HepG2 (cell line): ENCODE measurements at regions of chr3 and their contacts with region 1.

Region 1: GRCh38 chr3:151146071-151146730 is 56.8 kb downstream of the GPR171 start:
- DNase-seq: peak; percentile 75
- ATAC-seq: peak; percentile 99
- H3K4me3 ChIP-seq: no peak overlapping the region
- H3K27ac ChIP-seq: no peak overlapping the region
- H3K4me1 ChIP-seq: no peaks in the 10 kb centered on the region
- H3K27me3 ChIP-seq: peaks cover 2 to 7% of the 10 kb centered on the region in 2 experiments; a peak in 3 of 5 replicates
- CTCF ChIP-seq: peak; percentile 92
- EP300 ChIP-seq: no peak
- POLR2A ChIP-seq: no peak
- RAD21 ChIP-seq: peak; percentile 85

Region 2: DNA sequence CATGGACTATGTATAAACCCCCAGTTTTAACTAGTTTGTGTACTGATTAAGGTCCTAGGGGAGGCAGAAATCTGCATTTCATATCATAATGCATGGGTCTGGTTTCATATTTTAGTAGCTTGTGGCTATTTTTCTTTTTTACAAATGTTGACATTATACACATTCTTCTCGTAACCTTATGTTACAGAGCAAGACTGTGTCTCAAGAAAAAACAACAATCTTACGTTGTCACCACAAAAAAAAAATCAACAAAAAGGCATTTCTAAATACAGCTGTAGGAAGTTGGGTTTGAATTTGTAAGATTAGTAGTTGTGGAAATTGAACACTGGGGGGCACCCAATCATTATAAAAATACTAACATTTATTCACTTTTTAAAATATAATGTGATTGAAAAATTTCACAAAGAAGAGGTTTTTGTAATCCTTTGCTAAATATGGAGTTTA is 617.8 kb before region 1 on chr3:
- CTCF ChIA-PET with region 1: no interaction called
- POLR2A ChIA-PET with region 1: no interaction called
- in situ Hi-C with region 1: no loop called
- intact Hi-C with region 1: loop called (anchors 10 kb)
- DNase-seq: no peak
- ATAC-seq: no peak
- H3K4me3 ChIP-seq: no peak overlapping the region
- H3K27ac ChIP-seq: no peak overlapping the region
- H3K4me1 ChIP-seq: no peaks in the 10 kb centered on the region; the same call in 1 of the 2 replicates
- H3K27me3 ChIP-seq: no peaks in the 10 kb centered on the region; a peak in 1 of 5 replicates
- CTCF ChIP-seq: peak; percentile 20; the same call in 1 of the 2 replicates
- EP300 ChIP-seq: no peak
- POLR2A ChIP-seq: no peak
- RAD21 ChIP-seq: no peak

Region 3: GRCh38 chr3:150787741-150788370 is 358.3 kb before region 1 on chr3:
- CTCF ChIA-PET with region 1: interaction called, 4 read pairs
- POLR2A ChIA-PET with region 1: no interaction called
- in situ Hi-C with region 1: no loop called
- intact Hi-C with region 1: loop called (anchors 2 kb)
- DNase-seq: peak; percentile 53
- ATAC-seq: peak; percentile 95
- H3K4me3 ChIP-seq: no peak overlapping the region
- H3K27ac ChIP-seq: no peak overlapping the region
- H3K4me1 ChIP-seq: peaks cover 7% of the 10 kb centered on the region; the same call in 1 of the 2 replicates
- H3K27me3 ChIP-seq: peaks cover 2 to 10% of the 10 kb centered on the region in 2 experiments; a peak in 2 of 5 replicates
- CTCF ChIP-seq: peak; percentile 94
- EP300 ChIP-seq: no peak
- POLR2A ChIP-seq: no peak
- RAD21 ChIP-seq: peak; percentile 78

Region 4: DNA sequence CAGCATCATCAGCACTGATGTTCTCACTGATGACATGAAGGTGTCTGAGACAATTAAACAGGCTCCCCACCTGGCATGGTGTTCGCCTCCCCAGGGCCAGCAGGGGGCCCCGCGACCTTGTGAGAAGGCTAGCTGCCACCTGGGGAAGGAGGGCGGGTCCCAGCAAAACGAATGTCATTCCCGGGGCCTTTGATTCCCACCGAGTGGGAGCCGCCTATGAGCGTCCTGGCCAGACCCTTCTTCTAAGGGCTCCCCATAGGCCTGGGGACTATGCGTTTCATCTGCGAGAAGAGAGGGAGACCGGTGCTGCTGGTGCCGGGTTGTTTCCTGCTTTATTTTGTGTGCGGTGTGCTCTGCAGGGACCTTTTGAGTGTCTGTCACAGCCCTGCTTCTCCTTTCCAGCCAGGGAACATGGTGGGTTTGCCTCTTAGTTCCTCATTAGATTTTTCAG is 220.4 kb before region 1 on chr3:
- CTCF ChIA-PET with region 1: interaction called, 22 read pairs
- POLR2A ChIA-PET with region 1: no interaction called
- in situ Hi-C with region 1: loop called (anchors 5 kb)
- intact Hi-C with region 1: loop called (anchors 1 kb)
- DNase-seq: peak; percentile 50
- ATAC-seq: peak; percentile 99
- H3K4me3 ChIP-seq: peak overlapping the region in 1 of 3 experiments; percentile 19; a peak in 1 of 6 replicates
- H3K27ac ChIP-seq: no peak overlapping the region
- H3K4me1 ChIP-seq: no peaks in the 10 kb centered on the region
- H3K27me3 ChIP-seq: peaks cover 0 to 15% of the 10 kb centered on the region in 2 experiments; a peak in 2 of 5 replicates
- CTCF ChIP-seq: peak; percentile 73
- EP300 ChIP-seq: no peak
- POLR2A ChIP-seq: no peak
- RAD21 ChIP-seq: peak; percentile 63

Region 5: DNA sequence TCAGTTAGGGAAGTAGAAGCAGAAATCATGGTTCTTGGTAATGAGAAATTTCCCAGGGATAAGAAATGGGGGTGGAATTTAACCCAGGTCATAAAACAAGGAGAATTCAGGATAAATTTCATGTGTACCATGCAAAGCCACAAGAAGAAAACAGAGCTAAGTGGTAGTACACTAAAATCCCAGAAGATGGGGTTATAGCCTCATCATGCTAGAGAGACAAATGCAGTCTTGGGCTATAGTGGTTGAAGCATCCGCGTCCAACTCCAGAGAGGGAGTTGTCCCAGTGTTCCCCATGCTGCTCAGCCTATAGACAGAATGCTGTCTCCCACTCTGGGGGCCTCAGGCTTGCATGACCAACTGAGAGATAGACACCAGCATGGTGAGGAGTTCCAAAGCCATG is 137.5 kb before region 1 on chr3:
- CTCF ChIA-PET with region 1: interaction called, 5 read pairs
- POLR2A ChIA-PET with region 1: no interaction called
- in situ Hi-C with region 1: no loop called
- intact Hi-C with region 1: loop called (anchors 1 kb)
- DNase-seq: no peak
- ATAC-seq: peak; percentile 58
- H3K4me3 ChIP-seq: no peak overlapping the region
- H3K27ac ChIP-seq: no peak overlapping the region
- H3K4me1 ChIP-seq: 0 out of 2 replicates have a peak, but pooled peaks cover 10% of the 10 kb centered on the region
- H3K27me3 ChIP-seq: no peaks in the 10 kb centered on the region; a peak in 1 of 5 replicates
- CTCF ChIP-seq: peak; percentile 26; the same call in 1 of the 2 replicates
- EP300 ChIP-seq: no peak
- POLR2A ChIP-seq: no peak
- RAD21 ChIP-seq: no peak

Region 6: GRCh38 chr3:151067158-151067557 is 79.0 kb before region 1 on chr3:
- CTCF ChIA-PET with region 1: interaction called, 13 read pairs
- POLR2A ChIA-PET with region 1: no interaction called
- in situ Hi-C with region 1: no loop called
- intact Hi-C with region 1: loop called (anchors 1 kb)
- DNase-seq: peak; percentile 42
- ATAC-seq: peak; percentile 87
- H3K4me3 ChIP-seq: no peak overlapping the region
- H3K27ac ChIP-seq: no peak overlapping the region
- H3K4me1 ChIP-seq: no peaks in the 10 kb centered on the region
- H3K27me3 ChIP-seq: no peaks in the 10 kb centered on the region
- CTCF ChIP-seq: peak; percentile 72
- EP300 ChIP-seq: no peak
- POLR2A ChIP-seq: no peak
- RAD21 ChIP-seq: no peak

Region 7: GRCh38 chr3:151086484-151087456 is 59.4 kb before region 1 on chr3:
- CTCF ChIA-PET with region 1: no interaction called
- POLR2A ChIA-PET with region 1: no interaction called
- in situ Hi-C with region 1: no loop called
- intact Hi-C with region 1: loop called (anchors 5 kb)
- DNase-seq: peak; percentile 70
- ATAC-seq: peak; percentile 95
- H3K4me3 ChIP-seq: peak overlapping the region; percentile 42 to 68 (median 49)
- H3K27ac ChIP-seq: no peak overlapping the region
- H3K4me1 ChIP-seq: peaks cover 12% of the 10 kb centered on the region
- H3K27me3 ChIP-seq: peaks cover 9 to 36% of the 10 kb centered on the region in 2 experiments
- CTCF ChIP-seq: peak; percentile 64
- EP300 ChIP-seq: no peak
- POLR2A ChIP-seq: no peak
- RAD21 ChIP-seq: peak; percentile 61